ENCODE measurements at regions of chr5 and their contacts with region 1.

Region 1: GRCh38 chr5:160082614-160083500 is 36.4 kb downstream of the PWWP2A start:
- DNase-seq: peak; percentile 56
- H3K4me3 ChIP-seq: no peak overlapping the region
- H3K27ac ChIP-seq: no peak overlapping the region
- H3K4me1 ChIP-seq: peaks cover 22% of the 10 kb centered on the region
- H3K27me3 ChIP-seq: no peaks in the 10 kb centered on the region
- CTCF ChIP-seq: no peak

Region 2: GRCh38 chr5:158824241-158824882 is 1258.5 kb before region 1 on chr5:
- CTCF ChIA-PET with region 1: no interaction called
- dilution Hi-C with region 1: no loop called
- in situ Hi-C with region 1: no loop called
- intact Hi-C with region 1: no loop called
- DNase-seq: no peak
- H3K4me3 ChIP-seq: no peak overlapping the region
- H3K27ac ChIP-seq: no peak overlapping the region
- H3K4me1 ChIP-seq: no peaks in the 10 kb centered on the region
- H3K27me3 ChIP-seq: peaks cover 3% of the 10 kb centered on the region
- CTCF ChIP-seq: no peak

Region 3: GRCh38 chr5:159240301-159240870 is 842.5 kb before region 1 on chr5:
- CTCF ChIA-PET with region 1: no interaction called
- dilution Hi-C with region 1: no loop called
- in situ Hi-C with region 1: no loop called
- intact Hi-C with region 1: no loop called
- DNase-seq: no peak
- H3K4me3 ChIP-seq: no peak overlapping the region
- H3K27ac ChIP-seq: no peak overlapping the region
- H3K4me1 ChIP-seq: peaks cover 19% of the 10 kb centered on the region
- H3K27me3 ChIP-seq: no peaks in the 10 kb centered on the region
- CTCF ChIP-seq: no peak

Region 4: GRCh38 chr5:159987031-159987674 is 95.7 kb before region 1 on chr5:
- CTCF ChIA-PET with region 1: no interaction called
- dilution Hi-C with region 1: no loop called
- in situ Hi-C with region 1: no loop called
- intact Hi-C with region 1: no loop called
- DNase-seq: peak; percentile 76
- H3K4me3 ChIP-seq: peak overlapping the region; percentile 11 to 21 (median 18)
- H3K27ac ChIP-seq: no peak overlapping the region
- H3K4me1 ChIP-seq: peaks cover 29% of the 10 kb centered on the region
- H3K27me3 ChIP-seq: no peaks in the 10 kb centered on the region
- CTCF ChIP-seq: peak; percentile 81 to 89

Region 5: GRCh38 chr5:160119142-160119904 is 36.5 kb after region 1 on chr5 and contains the start of gene PWWP2A:
- CTCF ChIA-PET with region 1: no interaction called
- dilution Hi-C with region 1: no loop called
- in situ Hi-C with region 1: no loop called
- intact Hi-C with region 1: loop called (anchors 1 kb)
- DNase-seq: peak; percentile 100
- H3K4me3 ChIP-seq: peak within 1 kb of the TSS; percentile 85 to 99 (median 99)
- H3K27ac ChIP-seq: peak within 1 kb of the TSS; percentile 60
- H3K4me1 ChIP-seq: peaks cover 7% of the 10 kb centered on the region
- H3K27me3 ChIP-seq: no peaks in the 10 kb centered on the region
- CTCF ChIP-seq: peak in 1 of 2 donors; percentile 17
- total RNA-seq, gene PWWP2A: 14.7 to 16.7 TPM

Region 6: DNA sequence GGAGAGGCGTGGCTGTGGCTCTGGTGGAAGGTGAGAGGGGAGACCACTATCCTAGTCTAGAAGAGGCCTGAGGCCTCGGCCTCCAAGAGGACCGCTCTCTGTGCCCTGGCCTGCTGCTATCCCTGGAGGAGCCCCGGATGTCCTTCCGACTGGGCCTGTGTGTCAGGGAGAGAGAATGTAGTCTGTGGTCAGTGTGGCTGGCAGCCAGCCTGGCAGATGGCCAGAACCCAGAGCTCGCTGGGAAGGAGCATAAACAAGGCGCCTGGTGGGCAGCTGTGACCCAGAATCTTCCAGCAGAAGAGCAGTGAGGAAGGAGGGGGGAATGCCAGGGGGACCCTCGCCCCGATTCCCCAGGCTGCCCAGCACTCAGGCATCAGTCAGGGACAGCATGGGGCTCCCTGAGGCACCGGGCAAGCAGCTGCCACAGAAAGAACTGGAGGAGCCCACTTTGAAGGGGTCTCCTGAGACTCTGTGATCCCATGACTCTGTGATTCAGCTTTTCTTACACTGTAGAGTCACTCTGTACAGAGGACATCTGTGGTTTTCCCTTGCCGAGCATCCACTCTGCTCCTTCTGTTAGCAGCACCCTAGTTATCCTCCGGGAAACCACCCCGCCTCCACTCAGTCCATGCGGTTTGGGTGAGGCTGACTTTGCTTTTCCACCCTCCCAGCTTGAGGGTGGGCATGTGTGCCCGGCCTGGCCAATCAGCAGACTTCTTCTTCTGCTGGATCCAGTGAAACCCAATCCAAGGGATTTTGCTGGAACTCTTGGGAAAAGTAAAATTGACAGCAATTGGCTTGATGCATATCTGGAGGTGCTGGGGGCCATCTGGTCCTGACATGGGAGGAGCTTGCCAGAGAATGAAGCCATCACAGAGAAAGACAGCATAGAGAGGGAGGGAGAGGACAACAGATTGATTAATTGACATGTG is 82.5 kb after region 1 on chr5:
- CTCF ChIA-PET with region 1: no interaction called
- dilution Hi-C with region 1: no loop called
- in situ Hi-C with region 1: no loop called
- intact Hi-C with region 1: loop called (anchors 2 kb)
- DNase-seq: peak; percentile 98
- H3K4me3 ChIP-seq: peak overlapping the region in 1 of 3 experiments; percentile 18
- H3K27ac ChIP-seq: peak overlapping the region; percentile 90
- H3K4me1 ChIP-seq: peaks cover 30% of the 10 kb centered on the region
- H3K27me3 ChIP-seq: no peaks in the 10 kb centered on the region
- CTCF ChIP-seq: no peak

Region 7: GRCh38 chr5:160188142-160189015 is 105.5 kb after region 1 on chr5:
- CTCF ChIA-PET with region 1: no interaction called
- dilution Hi-C with region 1: loop called (anchors 5 kb)
- in situ Hi-C with region 1: no loop called
- intact Hi-C with region 1: no loop called
- DNase-seq: no peak
- H3K4me3 ChIP-seq: peak overlapping the region in 2 of 3 experiments; percentile 32 to 43
- H3K27ac ChIP-seq: no peak overlapping the region
- H3K4me1 ChIP-seq: peaks cover 4% of the 10 kb centered on the region
- H3K27me3 ChIP-seq: no peaks in the 10 kb centered on the region
- CTCF ChIP-seq: no peak

Region 8: DNA sequence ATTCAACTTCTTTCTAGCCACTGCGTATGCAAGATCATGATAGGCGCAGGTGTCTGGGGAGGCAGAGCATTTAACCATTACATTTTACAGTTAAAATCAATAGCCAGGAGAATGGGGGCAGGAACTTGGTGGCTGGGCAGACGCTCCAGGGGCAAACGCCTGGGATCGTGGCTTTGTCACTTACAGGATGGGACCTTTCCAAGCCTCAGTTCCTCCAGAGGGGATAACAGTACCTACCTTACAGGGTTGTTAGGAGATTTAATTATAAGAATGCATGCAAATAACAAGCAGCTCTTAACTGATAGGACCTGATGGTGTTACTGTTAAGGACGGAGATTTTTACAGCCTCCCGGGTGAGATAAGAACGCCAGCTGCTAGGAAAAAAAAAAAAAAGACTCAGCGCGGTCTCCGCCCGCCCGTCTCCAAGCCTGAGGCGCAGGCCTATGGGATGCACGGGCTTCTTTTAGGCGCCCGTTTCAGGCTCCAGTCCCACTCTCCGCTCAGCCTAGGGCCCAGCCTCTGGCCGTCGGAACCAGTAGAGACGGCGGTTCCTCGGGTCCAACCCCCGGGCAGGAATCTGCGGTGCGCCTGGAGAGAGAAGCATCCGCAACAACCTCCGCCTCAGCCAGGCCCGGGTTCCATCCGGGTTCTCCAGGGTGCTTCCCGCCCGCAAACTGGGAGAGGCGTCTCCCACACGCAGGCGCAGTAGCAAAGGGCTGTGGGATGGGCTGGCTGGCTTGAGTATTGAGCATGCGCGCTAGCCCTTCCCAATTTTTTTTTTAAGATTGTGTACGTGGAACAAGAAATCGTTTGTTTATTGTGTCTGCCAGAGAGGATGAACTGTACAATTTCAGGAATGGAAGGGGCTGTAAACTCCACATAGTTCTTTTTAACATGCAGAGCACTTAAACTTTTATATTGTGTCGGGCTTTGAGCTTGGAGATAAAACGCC is 316.8 kb after region 1 on chr5 and contains the start of gene FAM200C:
- CTCF ChIA-PET with region 1: no interaction called
- dilution Hi-C with region 1: no loop called
- in situ Hi-C with region 1: no loop called
- intact Hi-C with region 1: loop called (anchors 10 kb)
- DNase-seq: peak; percentile 89
- H3K4me3 ChIP-seq: peak within 1 kb of the TSS; percentile 71 to 77 (median 73)
- H3K27ac ChIP-seq: peak within 1 kb of the TSS; percentile 81
- H3K4me1 ChIP-seq: peaks cover 9% of the 10 kb centered on the region
- H3K27me3 ChIP-seq: no peaks in the 10 kb centered on the region
- CTCF ChIP-seq: no peak
- total RNA-seq, gene FAM200C: 1.6 to 2.8 TPM